Naive thymus-derived CD4-positive, alpha-beta T cell (primary cell): ENCODE measurements at regions of chr16 and their contacts with region 1.

Region 1: GRCh38 chr16:75110637-75111513 is 5.7 kb downstream of the LDHD start:
- DNase-seq: peak; percentile 66 to 83 (median 78)
- ATAC-seq: peak; percentile 91
- H3K4me3 ChIP-seq: peak overlapping the region; percentile 36
- H3K4me3 Mint-ChIP-seq: peak overlapping the region in 9 of 10 donors; percentile 34 to 78 (median 59)
- H3K27ac ChIP-seq: no peak overlapping the region
- H3K27ac Mint-ChIP-seq: peak overlapping the region in 6 of 9 donors; percentile 54 to 93 (median 78)
- H3K4me1 ChIP-seq: peaks cover 19 to 32% of the 10 kb centered on the region in 2 donors
- H3K4me1 Mint-ChIP-seq: peaks cover 30 to 66% (median 35%) of the 10 kb centered on the region in 7 donors
- H3K27me3 ChIP-seq: no peaks in the 10 kb centered on the region
- H3K27me3 Mint-ChIP-seq: peaks cover 0 to 10% (median 10%) of the 10 kb centered on the region in 5 donors

Region 2: DNA sequence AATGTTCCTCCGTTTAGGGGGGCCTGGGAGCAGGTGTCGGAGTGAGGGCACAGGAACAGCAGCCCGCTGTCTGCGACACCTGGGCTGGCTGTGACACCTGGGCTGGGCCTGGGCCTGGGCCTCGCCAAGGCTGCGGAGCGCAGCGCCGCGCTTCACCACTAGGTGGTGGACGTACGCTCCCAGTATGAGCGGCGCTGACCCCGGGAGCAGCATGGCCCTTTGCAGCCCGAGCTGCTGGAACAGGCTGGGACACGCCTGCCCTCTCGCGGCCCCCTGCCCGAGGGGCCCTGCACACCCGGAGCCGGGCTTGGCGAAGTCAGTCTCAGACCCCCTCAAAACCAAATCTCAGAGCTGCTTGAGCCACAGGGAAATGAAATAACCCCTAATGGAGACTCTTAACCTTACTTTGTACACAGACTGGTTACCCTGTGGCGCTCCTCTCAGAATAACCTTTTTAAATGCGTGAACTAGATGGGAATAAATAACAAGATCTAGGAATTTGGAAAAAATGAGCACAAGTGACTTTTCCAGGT is 297.7 kb before region 1 on chr16:
- CTCF ChIA-PET with region 1: interaction called, 5 read pairs
- POLR2A ChIA-PET with region 1: no interaction called
- intact Hi-C with region 1: loop called (anchors 1 kb)
- DNase-seq: peak; percentile 26 to 79 (median 61)
- ATAC-seq: peak; percentile 99
- H3K4me3 ChIP-seq: no peak overlapping the region
- H3K4me3 Mint-ChIP-seq: peak overlapping the region in 3 of 10 donors; percentile 15 to 30 (median 21)
- H3K27ac ChIP-seq: no peak overlapping the region
- H3K27ac Mint-ChIP-seq: no peak overlapping the region
- H3K4me1 ChIP-seq: no peaks in the 10 kb centered on the region
- H3K4me1 Mint-ChIP-seq: peaks cover 0 to 5% (median 0%) of the 10 kb centered on the region in 7 donors
- H3K27me3 ChIP-seq: no peaks in the 10 kb centered on the region
- H3K27me3 Mint-ChIP-seq: peaks cover 0 to 12% (median 0%) of the 10 kb centered on the region in 5 donors

Region 3: DNA sequence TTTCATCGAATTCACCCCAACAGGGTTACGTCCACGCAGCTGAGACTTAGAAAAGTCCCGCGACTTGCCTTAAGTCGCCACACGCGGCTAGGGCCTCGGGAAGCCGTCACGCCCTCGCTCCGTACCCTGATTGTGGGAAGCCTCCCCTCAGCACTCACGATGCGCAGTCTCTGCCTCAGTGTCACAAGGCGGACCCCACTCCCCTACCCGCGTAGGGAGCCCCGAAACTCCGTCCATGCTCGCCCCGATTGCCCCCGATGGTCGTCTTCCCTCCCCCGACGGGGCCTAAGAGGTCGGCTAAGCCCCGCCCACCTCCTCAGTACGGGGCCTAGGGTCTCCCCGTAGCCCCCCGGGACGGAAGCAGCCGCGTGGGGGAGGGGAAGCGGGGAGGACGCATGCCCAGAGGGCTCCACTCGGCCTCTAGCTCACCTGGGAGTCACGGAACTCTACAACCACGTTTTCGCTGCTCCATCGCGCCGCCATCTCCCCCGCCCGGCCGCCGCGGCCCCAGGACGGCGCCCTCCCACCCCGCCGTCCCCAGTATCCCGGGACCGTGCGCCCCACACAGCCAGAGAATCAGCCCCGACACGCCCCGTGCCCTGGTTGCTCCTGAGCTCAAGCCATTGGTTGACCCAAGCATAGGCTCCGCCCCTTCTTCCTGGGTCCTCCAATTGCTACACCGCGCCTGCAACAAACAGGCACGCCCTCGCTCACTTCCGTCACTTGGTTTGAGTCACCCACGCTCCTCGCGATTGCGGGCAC is 126.2 kb before region 1 on chr16 and contains the start of gene WDR59:
- CTCF ChIA-PET with region 1: interaction called, 6 read pairs
- POLR2A ChIA-PET with region 1: interaction called, 4 read pairs
- intact Hi-C with region 1: loop called (anchors 1 kb)
- DNase-seq: peak; percentile 87 to 99 (median 98)
- ATAC-seq: peak; percentile 100
- H3K4me3 ChIP-seq: peak within 1 kb of the TSS; percentile 98
- H3K4me3 Mint-ChIP-seq: peak within 1 kb of the TSS; percentile 90 to 98 (median 95)
- H3K27ac ChIP-seq: peak within 1 kb of the TSS; percentile 86
- H3K27ac Mint-ChIP-seq: peak within 1 kb of the TSS; percentile 72 to 96 (median 92)
- H3K4me1 ChIP-seq: peaks cover 5 to 6% of the 10 kb centered on the region in 2 donors
- H3K4me1 Mint-ChIP-seq: peaks cover 0 to 27% (median 23%) of the 10 kb centered on the region in 7 donors
- H3K27me3 ChIP-seq: no peaks in the 10 kb centered on the region
- H3K27me3 Mint-ChIP-seq: no peaks in the 10 kb centered on the region
- total RNA-seq, gene WDR59: 82.7 to 130 (median 84.7) TPM

Region 4: DNA sequence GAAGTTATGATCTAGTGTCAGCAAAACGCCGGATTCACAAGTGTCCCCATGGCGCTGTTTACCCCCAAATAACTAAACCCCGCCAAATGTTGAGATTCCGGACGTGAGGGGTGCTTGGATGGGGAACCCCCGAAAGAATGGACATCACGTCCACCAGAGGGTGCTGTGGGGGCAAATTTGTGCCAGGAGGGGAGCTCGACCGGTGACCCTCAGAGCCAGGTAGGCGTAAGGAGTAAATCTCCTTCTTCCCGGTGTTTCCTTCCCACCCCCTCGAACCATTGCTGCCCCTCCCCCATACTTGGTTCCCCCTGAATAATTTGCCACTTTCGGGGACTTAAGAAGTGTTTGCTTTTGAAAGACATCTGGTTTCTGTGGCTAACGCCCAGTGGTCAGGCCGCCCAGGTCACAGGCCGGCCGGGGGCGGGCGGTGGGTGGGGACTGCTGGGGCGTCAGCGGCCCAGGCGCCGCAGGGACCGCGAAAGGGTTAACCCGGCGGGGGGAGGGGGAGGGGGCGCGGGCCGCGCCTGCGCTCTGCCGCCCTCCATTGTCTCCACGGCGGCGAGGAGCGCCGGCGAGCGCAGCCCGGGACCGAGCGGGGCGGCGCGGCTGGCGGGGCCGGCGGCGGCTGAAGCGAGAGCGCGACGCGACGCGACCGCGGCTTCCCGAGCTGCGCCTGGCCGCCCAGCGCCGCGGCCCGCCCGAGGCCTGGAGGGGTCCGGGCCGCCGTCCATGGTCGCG is 112.2 kb before region 1 on chr16 and contains the start of gene ZNRF1:
- CTCF ChIA-PET with region 1: interaction called, 64 read pairs
- POLR2A ChIA-PET with region 1: interaction called, 12 read pairs
- intact Hi-C with region 1: loop called (anchors 1 kb)
- DNase-seq: peak; percentile 50 to 82 (median 67)
- ATAC-seq: peak; percentile 91
- H3K4me3 ChIP-seq: peak within 1 kb of the TSS; percentile 69
- H3K4me3 Mint-ChIP-seq: peak within 1 kb of the TSS; percentile 79 to 92 (median 87)
- H3K27ac ChIP-seq: peak within 1 kb of the TSS; percentile 54
- H3K27ac Mint-ChIP-seq: peak within 1 kb of the TSS; percentile 81 to 91 (median 86)
- H3K4me1 ChIP-seq: peaks cover 5 to 9% of the 10 kb centered on the region in 2 donors
- H3K4me1 Mint-ChIP-seq: peaks cover 5 to 42% (median 17%) of the 10 kb centered on the region in 7 donors
- H3K27me3 ChIP-seq: no peaks in the 10 kb centered on the region
- H3K27me3 Mint-ChIP-seq: peaks cover 0 to 19% (median 0%) of the 10 kb centered on the region in 5 donors
- total RNA-seq, gene ZNRF1: 1.8 to 27.9 (median 2.6) TPM

Region 5: DNA sequence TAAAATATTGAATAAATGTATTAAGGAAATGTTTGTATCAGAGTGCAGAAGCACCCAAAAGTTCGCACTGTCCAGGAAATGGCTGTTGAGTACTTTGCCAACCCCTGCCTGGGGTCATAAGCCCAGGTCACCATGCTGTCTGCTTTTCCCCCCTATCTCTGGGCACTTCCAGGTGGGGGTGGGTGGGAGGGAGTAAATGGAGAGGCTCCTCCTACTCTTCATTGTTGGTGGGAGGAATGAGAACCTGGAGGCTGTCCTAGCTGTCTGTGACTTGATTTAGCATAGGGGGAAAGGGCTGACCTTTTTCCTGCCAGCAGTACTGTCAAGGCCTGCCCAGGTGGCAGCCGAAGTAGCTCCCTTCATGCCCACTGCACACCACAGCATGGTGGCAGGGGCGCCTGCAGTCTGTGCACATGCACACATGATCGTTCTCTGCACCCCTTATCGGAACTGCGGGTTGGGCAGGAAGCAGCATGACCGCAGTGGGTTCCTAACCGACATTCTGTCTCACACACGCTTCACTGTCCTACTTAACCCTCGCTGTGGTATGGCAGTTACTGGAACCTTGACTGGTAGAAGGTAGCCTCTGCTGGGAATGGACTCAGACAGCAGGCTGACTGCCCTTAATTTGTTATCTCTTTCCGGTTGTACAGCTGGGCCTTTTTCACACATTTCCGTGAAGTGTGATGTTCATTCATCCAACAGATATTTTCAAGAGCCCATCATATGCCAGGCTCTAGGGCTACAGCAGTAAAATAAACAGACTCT is 35.8 kb before region 1 on chr16:
- CTCF ChIA-PET with region 1: interaction called, 9 read pairs
- POLR2A ChIA-PET with region 1: interaction called, 3 read pairs
- intact Hi-C with region 1: loop called (anchors 1 kb)
- DNase-seq: peak; percentile 45 to 86 (median 77)
- ATAC-seq: peak; percentile 97
- H3K4me3 ChIP-seq: peak overlapping the region; percentile 37
- H3K4me3 Mint-ChIP-seq: peak overlapping the region; percentile 58 to 83 (median 76)
- H3K27ac ChIP-seq: peak overlapping the region; percentile 36
- H3K27ac Mint-ChIP-seq: peak overlapping the region; percentile 84 to 100 (median 89)
- H3K4me1 ChIP-seq: peaks cover 16 to 38% of the 10 kb centered on the region in 2 donors
- H3K4me1 Mint-ChIP-seq: peaks cover 42 to 76% (median 64%) of the 10 kb centered on the region in 7 donors
- H3K27me3 ChIP-seq: no peaks in the 10 kb centered on the region
- H3K27me3 Mint-ChIP-seq: peaks cover 0 to 4% (median 0%) of the 10 kb centered on the region in 5 donors

Region 6: GRCh38 chr16:75130150-75130771 is 19.4 kb after region 1 on chr16:
- CTCF ChIA-PET with region 1: no interaction called
- POLR2A ChIA-PET with region 1: no interaction called
- intact Hi-C with region 1: no loop called
- DNase-seq: no peak
- ATAC-seq: no peak
- H3K4me3 ChIP-seq: no peak overlapping the region
- H3K4me3 Mint-ChIP-seq: no peak overlapping the region
- H3K27ac ChIP-seq: no peak overlapping the region
- H3K27ac Mint-ChIP-seq: no peak overlapping the region
- H3K4me1 ChIP-seq: peaks cover 0 to 7% of the 10 kb centered on the region in 2 donors
- H3K4me1 Mint-ChIP-seq: peaks cover 6 to 19% (median 11%) of the 10 kb centered on the region in 7 donors
- H3K27me3 ChIP-seq: no peaks in the 10 kb centered on the region
- H3K27me3 Mint-ChIP-seq: peaks cover 0 to 17% (median under 1%) of the 10 kb centered on the region in 5 donors